Ovary (tissue), 10 donors: ENCODE measurements at regions of chr3 and their contacts with region 1.

Region 1: DNA sequence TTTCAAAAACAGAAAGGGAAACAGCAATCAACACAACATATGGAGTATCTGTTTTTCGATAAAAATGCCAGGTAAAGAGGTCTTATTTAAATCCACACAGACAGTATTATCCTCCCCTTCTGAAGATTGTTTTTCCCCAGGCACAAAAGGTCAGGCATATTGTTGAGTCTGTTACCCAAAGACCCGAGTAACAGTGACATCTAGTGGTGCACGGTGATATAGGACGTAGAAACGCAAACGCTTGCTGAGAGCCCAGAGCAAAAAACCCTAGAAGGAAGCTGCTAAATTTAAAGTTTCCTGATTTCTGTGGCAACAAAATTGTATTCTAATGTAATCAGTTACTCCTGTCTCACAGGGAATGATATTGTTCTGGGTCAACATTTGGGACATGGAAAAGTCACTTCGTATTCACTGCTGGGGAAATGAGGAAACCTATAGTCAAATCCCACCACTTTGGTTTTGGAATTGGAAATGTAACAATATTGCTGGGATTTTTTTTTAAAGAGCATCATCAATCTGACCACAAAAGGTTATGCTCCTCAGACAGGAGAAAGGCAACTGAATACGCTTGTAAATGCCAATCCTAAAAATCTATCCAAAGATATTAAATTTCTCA is 312.7 kb upstream of the CCDC54 start:
- DNase-seq: peak; percentile 43 to 82 (median 71)
- H3K4me3 ChIP-seq: no peak overlapping the region
- H3K27ac ChIP-seq: peak overlapping the region in 1 of 2 donors; percentile 68
- H3K4me1 ChIP-seq: peaks cover 4% of the 10 kb centered on the region
- H3K27me3 ChIP-seq: no peaks in the 10 kb centered on the region
- CTCF ChIP-seq: peak; percentile 68 to 72 (median 69)
- EP300 ChIP-seq: no peak
- POLR2A ChIP-seq: no peak

Region 2: GRCh38 chr3:105686278-105686897 is 1378.2 kb before region 1 on chr3:
- intact Hi-C with region 1: loop called in 1 of 4 experiments (anchors 5 kb)
- DNase-seq: no peak
- H3K4me3 ChIP-seq: no peak overlapping the region
- H3K27ac ChIP-seq: no peak overlapping the region
- H3K4me1 ChIP-seq: no peaks in the 10 kb centered on the region
- H3K27me3 ChIP-seq: no peaks in the 10 kb centered on the region
- CTCF ChIP-seq: peak; percentile 29 to 61 (median 55)
- EP300 ChIP-seq: no peak
- POLR2A ChIP-seq: no peak

Region 3: GRCh38 chr3:106908181-106909051 is 156.1 kb before region 1 on chr3:
- intact Hi-C with region 1: no loop called
- DNase-seq: no peak
- H3K4me3 ChIP-seq: no peak overlapping the region
- H3K27ac ChIP-seq: no peak overlapping the region
- H3K4me1 ChIP-seq: no peaks in the 10 kb centered on the region
- H3K27me3 ChIP-seq: no peaks in the 10 kb centered on the region
- CTCF ChIP-seq: no peak
- EP300 ChIP-seq: no peak
- POLR2A ChIP-seq: no peak

Region 4: GRCh38 chr3:107045791-107046190 is 18.8 kb before region 1 on chr3:
- intact Hi-C with region 1: loop called in 1 of 4 experiments (anchors 1 kb)
- DNase-seq: no peak
- H3K4me3 ChIP-seq: no peak overlapping the region
- H3K27ac ChIP-seq: no peak overlapping the region
- H3K4me1 ChIP-seq: no peaks in the 10 kb centered on the region
- H3K27me3 ChIP-seq: no peaks in the 10 kb centered on the region
- CTCF ChIP-seq: no peak
- EP300 ChIP-seq: no peak
- POLR2A ChIP-seq: no peak

Region 5: GRCh38 chr3:108835101-108835500 is 1770.5 kb after region 1 on chr3:
- intact Hi-C with region 1: no loop called
- DNase-seq: no peak
- H3K4me3 ChIP-seq: no peak overlapping the region
- H3K27ac ChIP-seq: no peak overlapping the region
- H3K4me1 ChIP-seq: no peaks in the 10 kb centered on the region
- H3K27me3 ChIP-seq: no peaks in the 10 kb centered on the region
- CTCF ChIP-seq: no peak
- EP300 ChIP-seq: no peak
- POLR2A ChIP-seq: no peak